Heart left ventricle (tissue), 16 donors: ENCODE measurements at regions of chr12 and their contacts with region 1.

Region 1: GRCh38 chr12:46933947-46934346 is 108.2 kb upstream of the SLC38A4 start:
- DNase-seq: no peak
- ATAC-seq: peak; percentile 51 to 72 (median 60)
- H3K4me3 ChIP-seq: no peak overlapping the region
- H3K27ac ChIP-seq: no peak overlapping the region
- H3K4me1 ChIP-seq: no peaks in the 10 kb centered on the region
- H3K27me3 ChIP-seq: no peaks in the 10 kb centered on the region
- CTCF ChIP-seq: peak; percentile 36 to 70 (median 59)
- POLR2A ChIP-seq: no peak

Region 2: DNA sequence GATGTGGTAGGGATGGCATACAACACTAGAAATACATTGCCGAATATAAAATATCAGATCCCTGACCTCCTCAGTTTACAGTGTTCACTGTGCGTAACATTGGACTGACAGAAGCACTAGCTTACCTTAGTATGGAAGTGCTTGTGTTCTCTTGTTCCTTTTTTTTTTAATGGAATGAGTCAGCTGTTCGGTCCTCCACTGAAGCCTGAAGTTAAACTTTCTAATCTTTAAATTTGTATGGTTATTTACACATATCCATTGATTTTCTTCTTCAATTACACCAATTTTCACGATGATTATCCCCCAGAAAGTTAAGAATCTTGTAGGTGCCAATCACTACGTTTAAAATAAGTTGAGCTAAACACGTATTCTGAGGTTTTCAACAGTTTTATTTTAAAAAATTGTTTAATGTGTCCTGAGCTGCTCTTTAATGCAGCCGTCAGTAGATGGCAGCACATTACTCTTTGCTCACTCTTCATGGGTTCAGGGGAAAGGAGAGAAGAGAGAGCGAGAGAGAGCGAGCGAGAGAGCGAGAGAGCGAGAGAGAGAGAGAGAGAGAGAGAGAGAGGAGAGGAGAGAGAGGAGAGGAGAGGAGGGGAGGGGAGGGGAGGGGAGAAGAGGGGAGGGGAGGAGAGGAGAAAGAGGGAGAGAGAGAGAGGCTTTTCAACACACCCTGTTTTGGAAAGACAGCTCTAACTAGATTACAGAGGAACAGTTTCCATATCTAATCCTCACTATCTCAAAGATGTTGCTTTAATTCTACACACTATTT is 808.9 kb before region 1 on chr12:
- intact Hi-C with region 1: loop called in 5 of 10 experiments (anchors 5 to 10 kb)
- DNase-seq: peak in 3 of 5 donors; percentile 35 to 44 (median 36)
- ATAC-seq: peak; percentile 85 to 92 (median 91)
- H3K4me3 ChIP-seq: peak overlapping the region in 3 of 12 donors; percentile 22 to 38 (median 25)
- H3K27ac ChIP-seq: peak overlapping the region in 1 of 12 donors; percentile 27
- H3K4me1 ChIP-seq: peaks cover 0 to 14% (median 2%) of the 10 kb centered on the region in 12 donors
- H3K27me3 ChIP-seq: peaks cover 0 to 5% (median 0%) of the 10 kb centered on the region in 9 donors
- CTCF ChIP-seq: peak; percentile 23 to 77 (median 60)
- POLR2A ChIP-seq: no peak

Region 3: DNA sequence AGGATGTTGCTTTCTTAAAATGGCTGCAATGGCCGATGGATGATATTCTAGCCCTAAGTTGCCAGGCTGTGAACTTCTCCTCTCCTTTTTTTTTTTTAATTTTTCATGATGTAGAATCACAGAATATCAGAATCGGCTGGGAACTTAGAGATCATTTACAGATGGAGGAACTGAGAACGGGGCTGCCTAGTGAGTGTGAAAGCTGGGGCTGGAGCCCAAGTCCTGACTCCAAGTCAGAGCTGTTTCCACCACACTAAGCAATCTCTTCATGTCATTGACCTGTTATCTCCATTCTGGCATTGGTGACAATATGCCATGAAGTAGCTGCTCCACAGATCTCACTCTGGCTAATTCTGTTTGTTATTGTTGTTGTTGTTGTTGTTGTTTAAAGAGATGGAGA is 786.8 kb before region 1 on chr12:
- intact Hi-C with region 1: loop called in 1 of 10 experiments (anchors 10 kb)
- DNase-seq: no peak
- ATAC-seq: no peak
- H3K4me3 ChIP-seq: no peak overlapping the region
- H3K27ac ChIP-seq: no peak overlapping the region
- H3K4me1 ChIP-seq: no peaks in the 10 kb centered on the region
- H3K27me3 ChIP-seq: peaks cover 0 to 6% (median 0%) of the 10 kb centered on the region in 9 donors
- CTCF ChIP-seq: no peak
- POLR2A ChIP-seq: no peak

Region 4: DNA sequence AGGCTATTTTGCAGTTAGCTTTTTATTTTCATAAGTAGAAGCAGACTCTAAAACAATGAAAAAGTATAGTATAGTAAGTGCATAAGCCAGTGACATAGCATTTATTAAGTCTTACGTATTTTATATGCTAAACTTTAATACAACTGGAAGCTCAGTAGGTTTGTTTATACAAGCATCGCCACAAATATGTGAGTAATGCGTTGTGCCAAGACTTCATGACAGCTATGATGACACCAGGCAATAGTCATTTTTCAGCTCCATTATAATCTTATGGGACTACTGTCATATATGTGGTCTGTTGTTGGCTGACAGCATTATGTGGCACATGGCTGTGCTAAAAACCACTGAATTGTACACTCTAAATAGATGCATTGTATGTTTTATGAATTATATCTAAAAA is 601.7 kb before region 1 on chr12:
- intact Hi-C with region 1: loop called in 2 of 10 experiments (anchors 10 kb)
- DNase-seq: no peak
- ATAC-seq: no peak
- H3K4me3 ChIP-seq: no peak overlapping the region
- H3K27ac ChIP-seq: no peak overlapping the region
- H3K4me1 ChIP-seq: no peaks in the 10 kb centered on the region
- H3K27me3 ChIP-seq: no peaks in the 10 kb centered on the region
- CTCF ChIP-seq: no peak
- POLR2A ChIP-seq: no peak

Region 5: GRCh38 chr12:46342562-46343033 is 591.3 kb before region 1 on chr12:
- intact Hi-C with region 1: loop called in 9 of 10 experiments (anchors 2 to 10 kb)
- DNase-seq: peak in 2 of 5 donors; percentile 14 to 31
- ATAC-seq: peak in 3 of 4 donors; percentile 75 to 83 (median 78)
- H3K4me3 ChIP-seq: no peak overlapping the region
- H3K27ac ChIP-seq: no peak overlapping the region
- H3K4me1 ChIP-seq: peaks cover 0 to 6% (median 0%) of the 10 kb centered on the region in 12 donors
- H3K27me3 ChIP-seq: no peaks in the 10 kb centered on the region
- CTCF ChIP-seq: peak; percentile 50 to 81 (median 70)
- POLR2A ChIP-seq: no peak

Region 6: DNA sequence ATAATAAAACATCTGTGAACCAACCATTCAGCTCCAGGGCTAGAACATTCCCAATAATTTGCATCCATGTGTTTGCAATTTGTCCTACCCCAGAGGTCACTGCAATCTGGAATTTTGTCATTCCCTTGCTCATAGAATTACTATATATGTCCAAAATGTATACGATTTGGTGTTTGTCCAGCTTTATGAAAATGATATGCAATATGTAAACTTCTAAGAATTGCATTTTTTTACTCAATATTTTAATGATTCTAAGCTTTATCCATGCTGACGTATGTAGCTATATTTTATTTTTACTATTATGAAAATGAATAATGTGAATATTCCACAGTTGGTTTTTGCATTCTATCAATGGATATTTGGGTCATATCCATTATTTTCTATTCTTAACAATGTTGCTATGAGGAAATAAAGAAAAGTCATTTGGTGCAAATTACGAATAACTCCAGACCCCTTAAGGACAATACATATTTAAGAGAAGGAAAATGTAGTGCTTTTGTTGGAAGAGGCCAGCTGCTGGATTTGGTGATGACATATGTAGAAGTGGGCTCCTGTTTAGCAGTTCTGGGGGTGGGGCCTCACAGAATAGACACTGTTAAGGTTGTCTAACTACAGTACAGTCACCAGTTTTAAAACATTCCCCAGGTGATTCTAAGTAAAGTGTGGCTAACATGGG is 247.5 kb before region 1 on chr12:
- intact Hi-C with region 1: loop called in 1 of 10 experiments (anchors 5 kb)
- DNase-seq: no peak
- ATAC-seq: no peak
- H3K4me3 ChIP-seq: no peak overlapping the region
- H3K27ac ChIP-seq: no peak overlapping the region
- H3K4me1 ChIP-seq: no peaks in the 10 kb centered on the region
- H3K27me3 ChIP-seq: no peaks in the 10 kb centered on the region
- CTCF ChIP-seq: no peak
- POLR2A ChIP-seq: no peak

Region 7: GRCh38 chr12:46818654-46819053 is 115.3 kb before region 1 on chr12:
- intact Hi-C with region 1: no loop called
- DNase-seq: no peak
- ATAC-seq: no peak
- H3K4me3 ChIP-seq: no peak overlapping the region
- H3K27ac ChIP-seq: no peak overlapping the region
- H3K4me1 ChIP-seq: no peaks in the 10 kb centered on the region
- H3K27me3 ChIP-seq: no peaks in the 10 kb centered on the region
- CTCF ChIP-seq: no peak
- POLR2A ChIP-seq: no peak

Region 8: GRCh38 chr12:47286676-47287075 is 352.7 kb after region 1 on chr12:
- intact Hi-C with region 1: no loop called
- DNase-seq: no peak
- ATAC-seq: no peak
- H3K4me3 ChIP-seq: no peak overlapping the region
- H3K27ac ChIP-seq: no peak overlapping the region
- H3K4me1 ChIP-seq: peaks cover 0 to 5% (median 0%) of the 10 kb centered on the region in 12 donors
- H3K27me3 ChIP-seq: no peaks in the 10 kb centered on the region
- CTCF ChIP-seq: no peak
- POLR2A ChIP-seq: no peak